ENCODE measurements at regions of chr10 and their contacts with region 1.

Region 1: GRCh38 chr10:79459243-79459642 is 13.8 kb upstream of the ZCCHC24 start:
- DNase-seq: no peak
- H3K4me3 ChIP-seq: no peak overlapping the region
- H3K27ac ChIP-seq: no peak overlapping the region
- H3K4me1 ChIP-seq: peaks cover 0 to 7% (median 0%) of the 10 kb centered on the region in 4 donors
- H3K27me3 ChIP-seq: no peaks in the 10 kb centered on the region
- CTCF ChIP-seq: no peak
- EP300 ChIP-seq: no peak
- POLR2A ChIP-seq: no peak

Region 2: GRCh38 chr10:79390551-79391209 is 68.6 kb before region 1 on chr10:
- intact Hi-C with region 1: loop called (anchors 5 kb)
- DNase-seq: peak; percentile 21 to 72
- H3K4me3 ChIP-seq: no peak overlapping the region
- H3K27ac ChIP-seq: peak overlapping the region in 4 of 5 donors; percentile 37 to 73 (median 56)
- H3K4me1 ChIP-seq: peaks cover 4 to 44% (median 24%) of the 10 kb centered on the region in 4 donors
- H3K27me3 ChIP-seq: no peaks in the 10 kb centered on the region
- CTCF ChIP-seq: no peak
- EP300 ChIP-seq: no peak
- POLR2A ChIP-seq: no peak